Lower leg skin (tissue), 4 donors: ENCODE measurements at regions of chr19 and their contacts with region 1.

Region 1: GRCh38 chr19:56348289-56348877 is 33.7 kb upstream of the ZSCAN5A start:
- DNase-seq: no peak
- H3K4me3 ChIP-seq: no peak overlapping the region
- CTCF ChIP-seq: no peak
- POLR2A ChIP-seq: no peak

Region 2: GRCh38 chr19:56252699-56253422 is 95.5 kb before region 1 on chr19:
- intact Hi-C with region 1: loop called (anchors 10 kb)
- DNase-seq: peak; percentile 26 to 93
- H3K4me3 ChIP-seq: no peak overlapping the region
- CTCF ChIP-seq: no peak
- POLR2A ChIP-seq: no peak